Mammary epithelial cell (primary cell): ENCODE measurements at regions of chr2 and their contacts with region 1.

Region 1: DNA sequence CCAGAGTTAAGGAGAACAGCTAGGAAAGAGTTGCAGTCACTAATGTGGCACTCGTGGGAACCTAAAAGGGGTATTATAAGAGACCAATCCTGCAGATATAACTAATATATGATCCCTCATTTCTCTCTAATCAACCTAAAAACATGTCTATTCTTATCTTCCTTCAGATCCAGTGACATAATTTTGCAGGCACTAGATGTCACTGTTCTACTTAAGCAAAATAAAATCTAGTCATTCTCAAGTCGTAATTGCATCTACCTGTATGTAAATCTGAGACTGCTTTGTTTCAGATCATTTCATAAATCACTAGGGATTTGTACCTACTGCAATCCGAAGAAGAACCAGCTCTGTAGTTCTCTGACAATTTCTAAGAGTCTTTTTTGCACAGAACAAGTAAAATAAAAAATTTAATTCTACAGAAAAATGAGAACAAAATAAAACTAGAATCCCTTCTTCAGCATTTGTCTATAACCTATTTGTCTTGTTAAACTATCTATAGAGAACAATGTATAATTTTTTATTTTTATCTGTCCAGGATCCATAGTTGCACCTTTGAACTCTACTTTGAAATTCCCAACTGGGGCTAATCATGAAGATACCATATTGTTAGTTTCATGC is 56.5 kb upstream of the ERBB4 start:
- DNase-seq: peak; percentile 46
- H3K4me3 ChIP-seq: no peak overlapping the region
- H3K27ac ChIP-seq: no peak overlapping the region
- H3K4me1 ChIP-seq: peaks cover 15% of the 10 kb centered on the region
- H3K27me3 ChIP-seq: no peaks in the 10 kb centered on the region
- CTCF ChIP-seq: peak; percentile 57 to 61

Region 2: GRCh38 chr2:212646702-212647366 is 51.7 kb after region 1 on chr2:
- CTCF ChIA-PET with region 1: no interaction called
- dilution Hi-C with region 1: no loop called
- in situ Hi-C with region 1: no loop called
- intact Hi-C with region 1: loop called (anchors 2 kb)
- DNase-seq: peak; percentile 91
- H3K4me3 ChIP-seq: peak overlapping the region in 1 of 3 experiments; percentile 7
- H3K27ac ChIP-seq: peak overlapping the region; percentile 78
- H3K4me1 ChIP-seq: peaks cover 13% of the 10 kb centered on the region
- H3K27me3 ChIP-seq: no peaks in the 10 kb centered on the region
- CTCF ChIP-seq: no peak

Region 3: GRCh38 chr2:212686285-212686895 is 91.2 kb after region 1 on chr2:
- CTCF ChIA-PET with region 1: no interaction called
- dilution Hi-C with region 1: no loop called
- in situ Hi-C with region 1: no loop called
- intact Hi-C with region 1: loop called (anchors 1 kb)
- DNase-seq: peak; percentile 50
- H3K4me3 ChIP-seq: no peak overlapping the region
- H3K27ac ChIP-seq: no peak overlapping the region
- H3K4me1 ChIP-seq: no peaks in the 10 kb centered on the region
- H3K27me3 ChIP-seq: no peaks in the 10 kb centered on the region
- CTCF ChIP-seq: peak; percentile 75 to 83

Region 4: DNA sequence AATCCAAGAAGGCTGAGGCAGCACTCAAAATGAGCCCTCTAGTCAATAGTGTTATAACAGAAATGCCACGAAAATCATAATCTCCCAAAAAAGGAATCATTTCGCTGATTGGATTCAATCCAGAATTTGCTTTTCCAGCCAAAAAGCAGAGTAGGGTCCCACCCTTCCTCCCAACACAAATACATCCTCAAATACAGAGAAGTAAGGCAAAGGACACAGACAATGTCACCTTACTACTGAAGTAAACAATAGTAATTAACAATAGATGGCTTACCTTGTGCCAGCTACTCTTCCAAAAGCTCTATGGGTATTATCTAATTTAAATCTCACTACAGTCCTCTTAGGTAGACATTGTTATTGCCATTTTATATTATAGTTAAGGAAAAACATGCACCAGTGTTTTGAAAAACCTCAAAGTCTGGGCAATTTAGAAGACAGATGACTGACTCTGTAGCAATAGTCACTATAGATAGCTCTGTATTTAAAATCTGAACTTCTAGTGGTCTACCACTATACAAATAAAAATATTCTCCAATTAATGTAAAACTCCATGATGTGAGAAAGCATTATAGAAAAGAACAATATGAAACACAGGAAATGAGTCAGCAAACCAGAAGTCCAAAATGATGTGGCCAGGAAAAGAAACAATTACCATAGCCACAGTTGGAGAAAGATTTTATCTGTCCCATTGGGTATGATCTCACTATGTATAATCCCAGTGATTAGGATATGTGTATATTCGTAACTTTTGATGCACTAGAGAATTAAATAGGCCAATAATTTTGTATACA is 248.5 kb after region 1 on chr2:
- CTCF ChIA-PET with region 1: no interaction called
- dilution Hi-C with region 1: no loop called
- in situ Hi-C with region 1: no loop called
- intact Hi-C with region 1: loop called (anchors 10 kb)
- DNase-seq: peak; percentile 94
- H3K4me3 ChIP-seq: peak overlapping the region in 1 of 3 experiments; percentile 15
- H3K27ac ChIP-seq: peak overlapping the region; percentile 100
- H3K4me1 ChIP-seq: peaks cover 42% of the 10 kb centered on the region
- H3K27me3 ChIP-seq: no peaks in the 10 kb centered on the region
- CTCF ChIP-seq: no peak

Region 5: GRCh38 chr2:212905640-212906220 is 310.6 kb after region 1 on chr2:
- CTCF ChIA-PET with region 1: no interaction called
- dilution Hi-C with region 1: no loop called
- in situ Hi-C with region 1: no loop called
- intact Hi-C with region 1: no loop called
- DNase-seq: peak; percentile 95
- H3K4me3 ChIP-seq: no peak overlapping the region
- H3K27ac ChIP-seq: peak overlapping the region; percentile 90
- H3K4me1 ChIP-seq: peaks cover 25% of the 10 kb centered on the region
- H3K27me3 ChIP-seq: no peaks in the 10 kb centered on the region
- CTCF ChIP-seq: no peak

Region 6: GRCh38 chr2:213086571-213086970 is 491.4 kb after region 1 on chr2:
- CTCF ChIA-PET with region 1: no interaction called
- dilution Hi-C with region 1: no loop called
- in situ Hi-C with region 1: no loop called
- intact Hi-C with region 1: loop called (anchors 10 kb)
- DNase-seq: no peak
- H3K4me3 ChIP-seq: no peak overlapping the region
- H3K27ac ChIP-seq: no peak overlapping the region
- H3K4me1 ChIP-seq: peaks cover 3% of the 10 kb centered on the region
- H3K27me3 ChIP-seq: no peaks in the 10 kb centered on the region
- CTCF ChIP-seq: no peak

Region 7: DNA sequence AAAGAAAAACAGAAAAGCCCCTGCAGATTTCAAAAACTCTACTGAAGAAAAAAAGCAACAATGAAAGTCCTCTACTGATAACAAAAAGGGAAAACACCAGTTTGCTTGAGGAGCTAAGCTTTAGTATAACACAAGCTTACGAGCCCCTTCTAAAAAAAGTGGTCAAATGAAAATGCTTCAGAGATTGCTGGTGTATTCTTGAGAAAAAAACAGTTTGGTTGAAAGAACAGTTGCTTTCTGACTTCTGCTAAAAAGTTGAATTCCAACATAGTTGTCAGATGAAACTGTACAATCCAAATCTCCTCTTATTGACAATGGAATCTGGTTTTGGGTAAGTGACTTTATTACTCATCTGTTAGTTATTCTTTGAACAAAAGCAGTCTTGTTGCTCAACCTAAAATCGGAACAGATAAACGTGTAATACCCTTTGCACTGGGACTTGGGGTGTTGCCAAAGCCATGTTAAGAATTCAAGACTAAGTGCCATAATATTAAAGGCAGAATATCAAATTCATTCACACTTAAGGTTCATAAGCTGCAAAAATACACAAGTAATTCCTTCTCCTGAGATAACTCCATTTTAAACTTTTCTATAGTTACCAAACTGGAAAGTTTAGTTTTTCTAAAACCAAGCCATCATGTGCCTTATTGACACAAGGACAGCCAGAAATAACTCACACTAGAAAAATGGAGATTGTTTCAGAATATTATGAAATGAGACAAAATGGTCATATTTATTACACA is 643.8 kb after region 1 on chr2:
- CTCF ChIA-PET with region 1: no interaction called
- dilution Hi-C with region 1: no loop called
- in situ Hi-C with region 1: no loop called
- intact Hi-C with region 1: loop called (anchors 5 kb)
- DNase-seq: peak; percentile 74
- H3K4me3 ChIP-seq: peak overlapping the region in 2 of 3 experiments; percentile 26 to 39
- H3K27ac ChIP-seq: peak overlapping the region; percentile 93
- H3K4me1 ChIP-seq: peaks cover 11% of the 10 kb centered on the region
- H3K27me3 ChIP-seq: no peaks in the 10 kb centered on the region
- CTCF ChIP-seq: no peak